ENCODE measurements at regions of chrX and their contacts with region 1.

Region 1: GRCh38 chrX:19887911-19888879 is 795 bp upstream of the SH3KBP1 start:
- DNase-seq: no peak

Region 2: DNA sequence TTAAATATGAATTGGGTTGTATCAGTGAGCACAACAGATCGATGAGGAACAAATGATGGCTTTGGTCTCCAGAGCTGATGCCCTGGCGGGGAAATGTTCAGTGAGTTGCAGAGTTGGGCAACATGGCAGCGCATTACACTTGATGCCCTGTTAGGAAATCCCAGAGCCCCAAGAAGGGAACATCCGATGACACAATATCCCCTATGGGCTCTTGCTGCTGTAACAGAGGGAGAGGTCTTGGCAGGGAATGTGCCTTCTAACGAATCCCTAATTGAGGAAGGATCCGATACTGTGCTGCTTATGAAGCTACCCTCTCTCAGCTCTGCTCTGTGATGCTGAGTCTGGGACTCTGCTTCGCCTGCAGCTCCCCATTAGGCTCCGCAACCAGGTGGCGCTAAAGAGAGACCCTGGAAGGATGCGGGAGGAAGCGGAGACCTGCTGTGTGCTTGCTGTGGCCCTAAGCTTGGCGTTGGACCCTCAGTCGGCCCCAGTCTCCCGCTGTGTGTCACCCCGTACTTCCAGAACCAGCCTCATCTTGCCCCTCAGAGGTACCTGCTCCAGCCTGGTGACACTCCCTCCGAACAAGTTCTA is 505.5 kb before region 1 on chrX:
- intact Hi-C with region 1: loop called (anchors 10 kb)
- DNase-seq: no peak

Region 3: DNA sequence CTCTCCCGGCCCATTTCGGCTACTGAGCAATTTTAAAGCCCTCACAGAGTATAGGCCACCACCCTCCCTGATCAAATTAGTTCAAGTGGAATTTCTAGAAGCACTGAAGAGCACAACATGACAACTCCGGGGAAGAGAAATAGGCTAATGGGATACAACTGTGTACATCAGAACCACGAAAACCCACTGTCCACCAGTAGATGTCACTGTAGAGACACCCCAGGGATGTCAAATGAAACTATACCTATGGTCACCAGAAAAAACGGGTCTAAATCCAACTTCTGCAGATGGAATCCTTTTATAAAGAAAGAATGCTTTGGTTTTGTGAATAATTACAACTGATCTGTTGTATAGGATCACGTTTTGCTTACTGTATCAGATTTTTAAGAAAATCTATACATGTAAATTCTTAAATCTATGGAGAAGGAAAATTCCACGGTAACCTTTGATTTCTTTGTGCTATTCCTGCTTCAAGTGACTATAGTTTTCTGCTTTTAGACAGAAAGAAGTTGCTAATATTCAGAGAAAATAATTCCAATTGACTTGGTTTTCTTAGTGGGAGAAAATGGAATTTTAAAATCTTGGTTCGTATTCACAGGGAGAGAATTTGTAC is 343.4 kb before region 1 on chrX:
- intact Hi-C with region 1: loop called (anchors 5 kb)
- DNase-seq: no peak

Region 4: GRCh38 chrX:19739683-19740082 is 148.5 kb before region 1 on chrX:
- intact Hi-C with region 1: loop called (anchors 2 kb)
- DNase-seq: no peak

Region 5: DNA sequence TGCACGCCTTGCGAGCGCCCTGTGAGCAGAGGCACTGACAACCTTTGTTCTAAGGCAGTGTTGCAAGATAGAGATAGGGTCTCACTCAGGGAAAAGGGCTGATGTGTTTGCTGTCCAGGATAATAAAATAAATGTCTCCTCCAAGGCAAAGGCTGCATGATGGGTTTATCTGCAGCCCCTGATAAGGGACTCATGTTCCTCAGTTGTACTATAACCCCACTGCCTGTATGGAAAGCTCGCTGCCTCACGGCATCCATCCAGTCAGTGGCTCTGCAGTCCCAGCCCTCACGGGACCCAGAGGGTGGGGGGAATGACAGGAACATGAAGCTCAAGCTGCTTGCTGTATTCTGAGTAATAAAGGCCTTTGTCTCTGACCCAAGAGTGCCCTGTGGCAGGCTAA is 80.1 kb after region 1 on chrX:
- intact Hi-C with region 1: no loop called
- DNase-seq: no peak